BJ (cell line): ENCODE measurements at regions of chr2 and their contacts with region 1.

Region 1: GRCh38 chr2:118003396-118003824 is 10.5 kb downstream of the CCDC93 start:
- DNase-seq: peak; percentile 32
- H3K4me3 ChIP-seq: no peak overlapping the region
- H3K27me3 ChIP-seq: no peaks in the 10 kb centered on the region
- CTCF ChIP-seq: peak; percentile 78

Region 2: GRCh38 chr2:117692001-117692763 is 311.2 kb before region 1 on chr2:
- CTCF ChIA-PET with region 1: no interaction called
- POLR2A ChIA-PET with region 1: no interaction called
- DNase-seq: no peak
- H3K4me3 ChIP-seq: no peak overlapping the region
- H3K27me3 ChIP-seq: no peaks in the 10 kb centered on the region
- CTCF ChIP-seq: no peak

Region 3: DNA sequence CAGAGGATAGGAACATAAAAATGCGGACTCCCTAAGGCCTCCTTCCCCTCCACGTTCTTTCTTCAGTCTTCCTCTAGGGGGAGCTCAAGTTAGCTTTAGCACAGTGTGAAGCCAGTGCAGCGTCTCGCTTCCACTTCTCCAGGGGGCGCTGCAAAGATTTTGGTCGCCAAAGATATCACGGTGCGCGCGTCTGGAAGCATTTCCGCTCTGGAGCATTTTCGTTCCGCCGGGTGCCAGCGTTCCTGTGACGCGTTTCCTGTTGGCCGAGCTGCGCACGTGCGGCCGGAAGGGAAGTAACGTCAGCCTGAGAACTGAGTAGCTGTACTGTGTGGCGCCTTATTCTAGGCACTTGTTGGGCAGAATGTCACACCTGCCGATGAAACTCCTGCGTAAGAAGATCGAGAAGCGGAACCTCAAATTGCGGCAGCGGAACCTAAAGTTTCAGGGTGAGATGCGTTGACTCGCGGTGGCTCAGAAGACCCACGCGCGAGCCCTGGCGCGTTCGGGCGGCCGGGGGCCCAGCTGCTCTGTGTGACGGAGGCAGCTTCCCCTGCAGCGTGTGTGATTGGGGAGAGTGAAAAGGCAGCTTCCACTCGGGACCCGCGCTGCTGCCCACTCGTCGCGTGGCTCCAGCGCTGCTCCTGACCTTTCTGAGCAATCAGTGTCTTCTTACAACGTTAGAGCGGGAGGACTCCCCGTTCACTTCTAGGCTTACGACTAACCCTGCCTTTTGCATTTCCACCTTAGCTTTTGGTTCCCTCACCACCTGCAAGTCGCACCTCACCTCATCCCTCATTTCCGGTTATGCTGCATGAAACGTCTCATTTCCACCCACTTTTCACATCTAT is 188.8 kb before region 1 on chr2 and contains the start of gene DDX18:
- CTCF ChIA-PET with region 1: interaction called, 139 read pairs
- POLR2A ChIA-PET with region 1: no interaction called
- DNase-seq: peak; percentile 81
- H3K4me3 ChIP-seq: peak within 1 kb of the TSS; percentile 90
- H3K27me3 ChIP-seq: no peaks in the 10 kb centered on the region
- CTCF ChIP-seq: peak; percentile 100
- polyA plus RNA-seq, gene DDX18: 30.9 and 42.8 TPM in 2 replicates

Region 4: DNA sequence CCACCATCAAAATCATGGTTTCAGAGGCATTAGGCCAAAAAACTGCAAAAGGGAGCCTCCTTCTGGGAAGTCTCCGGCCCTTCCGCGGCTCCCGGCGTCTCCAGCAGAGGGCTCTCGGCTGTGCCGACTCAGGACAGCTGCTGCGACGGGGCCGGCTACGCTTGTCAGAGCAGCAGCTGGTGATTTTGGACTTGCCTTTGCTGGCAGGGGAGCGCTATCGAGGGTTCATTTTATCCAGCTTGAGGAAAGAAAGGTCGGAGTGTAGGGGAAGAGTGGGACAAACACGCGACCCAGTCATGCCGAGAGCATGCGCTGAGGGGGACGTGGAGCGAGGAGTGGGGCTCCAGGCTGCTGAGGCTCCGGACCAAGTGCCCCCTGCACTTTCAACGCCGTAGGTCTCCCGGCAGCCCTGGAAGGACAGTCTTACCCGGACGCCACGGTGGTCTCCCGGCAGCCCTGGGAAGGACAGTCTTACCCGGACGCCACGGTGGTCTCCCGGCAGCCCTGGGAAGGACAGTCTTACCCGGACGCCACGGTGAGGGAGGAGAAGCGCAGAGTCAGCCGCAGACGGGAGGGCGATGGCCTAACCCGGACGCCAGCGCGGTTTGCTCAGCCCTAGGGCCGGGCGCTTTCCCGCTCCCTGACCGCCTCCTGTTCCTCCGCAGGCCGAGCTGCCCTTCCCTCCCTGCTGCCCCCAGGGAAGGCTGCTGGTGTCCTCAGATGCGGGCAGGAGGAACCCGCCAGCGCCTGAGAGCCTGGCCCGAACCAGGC is 167.2 kb before region 1 on chr2:
- CTCF ChIA-PET with region 1: interaction called, 243 read pairs
- POLR2A ChIA-PET with region 1: interaction called, 3 read pairs
- DNase-seq: no peak
- H3K4me3 ChIP-seq: peak overlapping the region; percentile 41
- H3K27me3 ChIP-seq: no peaks in the 10 kb centered on the region
- CTCF ChIP-seq: peak; percentile 98

Region 5: DNA sequence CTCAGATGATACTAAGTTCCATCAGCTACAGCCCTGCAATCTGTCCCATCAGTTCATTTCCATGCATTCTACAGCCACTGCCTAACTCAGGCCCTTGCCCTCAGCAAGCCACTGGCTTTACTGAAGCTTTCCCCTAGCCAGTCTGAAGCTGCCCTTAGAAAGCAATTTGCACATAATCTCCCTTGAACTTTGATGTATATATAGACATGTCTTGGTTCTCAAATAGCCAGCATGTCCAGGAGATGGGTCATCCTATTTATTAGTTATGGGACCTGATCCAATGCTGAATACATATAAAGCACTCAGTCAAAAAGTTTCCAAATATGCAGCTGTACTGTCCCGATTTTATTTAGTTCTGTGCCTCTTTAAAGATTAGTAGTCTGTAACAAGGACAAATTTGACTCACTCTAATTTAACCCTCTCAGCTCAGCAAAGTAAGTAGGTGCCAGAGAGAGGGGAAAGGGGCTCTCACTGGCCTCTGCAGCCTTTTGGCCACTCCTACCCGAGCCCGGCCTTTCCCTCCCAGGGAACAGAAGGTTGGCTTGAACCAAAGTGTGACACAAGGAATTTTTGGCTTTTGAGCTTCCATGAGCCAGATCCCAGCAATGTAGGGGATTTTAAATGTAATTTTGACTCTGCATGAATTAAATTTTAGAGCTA is 60.3 kb before region 1 on chr2:
- CTCF ChIA-PET with region 1: interaction called, 37 read pairs
- POLR2A ChIA-PET with region 1: no interaction called
- DNase-seq: peak; percentile 77
- H3K4me3 ChIP-seq: no peak overlapping the region
- H3K27me3 ChIP-seq: no peaks in the 10 kb centered on the region
- CTCF ChIP-seq: no peak

Region 6: GRCh38 chr2:117958186-117958585 is 45.2 kb before region 1 on chr2:
- CTCF ChIA-PET with region 1: interaction called, 23 read pairs
- POLR2A ChIA-PET with region 1: no interaction called
- DNase-seq: peak; percentile 56
- H3K4me3 ChIP-seq: no peak overlapping the region
- H3K27me3 ChIP-seq: no peaks in the 10 kb centered on the region
- CTCF ChIP-seq: no peak

Region 7: DNA sequence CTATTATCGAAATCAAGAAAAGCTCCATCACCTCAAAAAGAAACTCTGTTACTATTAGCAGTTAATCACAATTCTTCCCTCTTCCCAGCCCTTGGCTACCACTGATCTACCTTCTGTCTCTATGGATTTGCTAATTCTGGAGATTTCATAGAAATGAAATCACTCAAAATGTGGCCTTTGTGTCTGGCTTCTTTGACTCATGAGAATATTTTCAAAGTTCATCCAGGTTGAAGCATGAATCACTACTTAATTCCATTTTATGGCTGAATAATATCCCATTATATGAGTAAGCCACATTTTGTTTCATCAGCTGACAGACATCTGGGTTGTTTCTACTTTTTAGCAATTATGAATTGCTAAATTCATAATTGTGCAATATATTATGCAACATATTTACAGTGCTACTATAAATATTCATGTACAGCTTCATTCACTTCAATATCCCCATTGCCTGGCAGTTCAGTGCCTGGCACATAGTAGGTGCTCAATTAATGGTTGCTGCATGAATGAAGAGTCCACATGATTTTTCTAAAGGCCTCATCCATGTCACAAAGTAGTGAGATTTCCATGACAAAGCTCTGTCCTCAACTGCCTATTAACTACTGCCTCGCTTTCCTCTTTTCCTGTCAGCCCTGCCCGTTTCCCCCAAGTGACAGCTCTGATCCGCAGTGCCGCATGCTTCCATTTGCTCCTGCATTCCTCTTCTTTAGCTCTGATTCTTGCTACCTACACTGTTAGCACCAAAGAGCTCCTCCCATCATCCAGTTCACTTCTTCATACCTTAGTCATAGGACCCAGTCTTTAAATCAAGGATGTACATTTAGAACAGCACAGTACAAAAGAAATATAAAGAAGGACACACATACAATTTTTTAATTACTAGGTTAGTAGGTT is 22.4 kb before region 1 on chr2:
- CTCF ChIA-PET with region 1: interaction called, 74 read pairs
- POLR2A ChIA-PET with region 1: no interaction called
- DNase-seq: peak; percentile 96
- H3K4me3 ChIP-seq: no peak overlapping the region
- H3K27me3 ChIP-seq: no peaks in the 10 kb centered on the region
- CTCF ChIP-seq: no peak